B cell (primary cell): ENCODE measurements at regions of chr13 and their contacts with region 1.

Region 1: GRCh38 chr13:67224148-67224846 is 5.8 kb downstream of the PCDH9 start:
- DNase-seq: peak; percentile 83
- ATAC-seq: peak; percentile 72
- H3K4me3 ChIP-seq: peak overlapping the region; percentile 22 to 56 (median 35)
- H3K4me3 Mint-ChIP-seq: peak overlapping the region; percentile 72
- H3K27ac ChIP-seq: peak overlapping the region in 1 of 2 donors; percentile 42
- H3K27ac Mint-ChIP-seq: peak overlapping the region; percentile 57
- H3K4me1 ChIP-seq: peaks cover 16 to 50% of the 10 kb centered on the region in 2 donors
- H3K4me1 Mint-ChIP-seq: peaks cover 36% of the 10 kb centered on the region
- H3K27me3 ChIP-seq: no peaks in the 10 kb centered on the region
- H3K27me3 Mint-ChIP-seq: no peaks in the 10 kb centered on the region
- CTCF ChIP-seq: peak; percentile 75

Region 2: GRCh38 chr13:65656740-65657329 is 1567.5 kb before region 1 on chr13:
- CTCF ChIA-PET with region 1: no interaction called
- POLR2A ChIA-PET with region 1: no interaction called
- intact Hi-C with region 1: loop called (anchors 10 kb)
- DNase-seq: no peak
- ATAC-seq: no peak
- H3K4me3 ChIP-seq: no peak overlapping the region
- H3K4me3 Mint-ChIP-seq: no peak overlapping the region
- H3K27ac ChIP-seq: no peak overlapping the region
- H3K27ac Mint-ChIP-seq: no peak overlapping the region
- H3K4me1 ChIP-seq: no peaks in the 10 kb centered on the region
- H3K4me1 Mint-ChIP-seq: no peaks in the 10 kb centered on the region
- H3K27me3 ChIP-seq: no peaks in the 10 kb centered on the region
- H3K27me3 Mint-ChIP-seq: no peaks in the 10 kb centered on the region
- CTCF ChIP-seq: no peak

Region 3: DNA sequence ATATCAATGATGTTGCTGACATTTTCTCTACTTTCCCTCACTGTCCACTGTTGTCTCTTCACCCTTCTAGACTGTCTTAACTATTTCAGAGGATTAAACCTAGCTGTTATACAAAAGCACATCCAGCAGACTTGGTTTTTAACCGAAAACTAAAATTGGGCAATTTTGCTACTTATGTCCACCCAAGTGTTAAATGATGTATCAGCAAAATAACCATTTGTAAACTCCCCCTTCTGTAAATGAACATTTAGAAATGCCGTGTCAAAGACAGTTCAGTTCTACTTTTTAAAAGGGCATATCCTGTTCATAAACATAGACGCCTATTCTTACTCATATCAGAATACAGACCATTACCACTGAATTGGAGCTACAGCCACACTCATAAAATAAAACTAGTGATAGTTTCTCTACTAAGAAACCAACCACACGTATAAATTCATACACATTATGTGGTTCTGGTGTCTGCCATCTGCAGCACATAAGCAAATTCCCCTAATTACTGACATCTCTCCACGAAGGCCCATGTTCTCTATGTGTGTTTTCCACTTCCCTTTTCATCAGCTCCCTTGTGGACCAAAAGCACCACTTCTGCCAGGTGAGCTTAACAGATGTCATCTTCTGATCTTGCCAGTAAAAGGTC is 1086.0 kb before region 1 on chr13:
- CTCF ChIA-PET with region 1: no interaction called
- POLR2A ChIA-PET with region 1: no interaction called
- intact Hi-C with region 1: loop called (anchors 10 kb)
- DNase-seq: peak; percentile 73
- ATAC-seq: peak; percentile 89
- H3K4me3 ChIP-seq: no peak overlapping the region
- H3K4me3 Mint-ChIP-seq: peak overlapping the region; percentile 5
- H3K27ac ChIP-seq: peak overlapping the region; percentile 46 to 54
- H3K27ac Mint-ChIP-seq: peak overlapping the region; percentile 73
- H3K4me1 ChIP-seq: peaks cover 30 to 31% of the 10 kb centered on the region in 2 donors
- H3K4me1 Mint-ChIP-seq: peaks cover 26% of the 10 kb centered on the region
- H3K27me3 ChIP-seq: no peaks in the 10 kb centered on the region
- H3K27me3 Mint-ChIP-seq: no peaks in the 10 kb centered on the region
- CTCF ChIP-seq: no peak

Region 4: GRCh38 chr13:66618702-66619101 is 605.6 kb before region 1 on chr13:
- CTCF ChIA-PET with region 1: interaction called, 7 read pairs
- POLR2A ChIA-PET with region 1: no interaction called
- intact Hi-C with region 1: loop called (anchors 2 kb)
- DNase-seq: peak; percentile 18
- ATAC-seq: no peak
- H3K4me3 ChIP-seq: no peak overlapping the region
- H3K4me3 Mint-ChIP-seq: no peak overlapping the region
- H3K27ac ChIP-seq: no peak overlapping the region
- H3K27ac Mint-ChIP-seq: no peak overlapping the region
- H3K4me1 ChIP-seq: no peaks in the 10 kb centered on the region
- H3K4me1 Mint-ChIP-seq: no peaks in the 10 kb centered on the region
- H3K27me3 ChIP-seq: no peaks in the 10 kb centered on the region
- H3K27me3 Mint-ChIP-seq: no peaks in the 10 kb centered on the region
- CTCF ChIP-seq: peak; percentile 64

Region 5: DNA sequence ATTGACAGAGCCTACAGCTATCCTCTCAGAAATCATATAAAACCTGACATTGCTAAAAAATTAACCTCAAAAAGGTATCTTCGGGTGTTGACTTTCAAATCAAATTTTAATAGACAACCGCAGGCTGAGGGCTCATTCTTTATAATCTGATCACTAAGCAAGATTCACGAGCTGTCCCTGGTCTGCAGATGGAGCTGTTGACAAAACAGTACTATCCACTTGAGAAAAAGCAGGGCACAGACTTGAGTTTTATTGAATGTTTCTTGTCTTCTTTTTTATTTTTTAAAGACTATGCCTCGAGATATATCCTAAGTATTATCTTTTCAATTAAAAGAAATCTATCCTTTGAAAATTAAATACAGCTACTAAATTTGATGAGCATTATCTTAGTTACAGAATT is 534.7 kb before region 1 on chr13:
- CTCF ChIA-PET with region 1: interaction called, 7 read pairs
- POLR2A ChIA-PET with region 1: no interaction called
- intact Hi-C with region 1: loop called (anchors 1 kb)
- DNase-seq: peak; percentile 18
- ATAC-seq: no peak
- H3K4me3 ChIP-seq: no peak overlapping the region
- H3K4me3 Mint-ChIP-seq: no peak overlapping the region
- H3K27ac ChIP-seq: no peak overlapping the region
- H3K27ac Mint-ChIP-seq: no peak overlapping the region
- H3K4me1 ChIP-seq: peaks cover 0 to 6% of the 10 kb centered on the region in 2 donors
- H3K4me1 Mint-ChIP-seq: peaks cover 11% of the 10 kb centered on the region
- H3K27me3 ChIP-seq: no peaks in the 10 kb centered on the region
- H3K27me3 Mint-ChIP-seq: no peaks in the 10 kb centered on the region
- CTCF ChIP-seq: no peak

Region 6: DNA sequence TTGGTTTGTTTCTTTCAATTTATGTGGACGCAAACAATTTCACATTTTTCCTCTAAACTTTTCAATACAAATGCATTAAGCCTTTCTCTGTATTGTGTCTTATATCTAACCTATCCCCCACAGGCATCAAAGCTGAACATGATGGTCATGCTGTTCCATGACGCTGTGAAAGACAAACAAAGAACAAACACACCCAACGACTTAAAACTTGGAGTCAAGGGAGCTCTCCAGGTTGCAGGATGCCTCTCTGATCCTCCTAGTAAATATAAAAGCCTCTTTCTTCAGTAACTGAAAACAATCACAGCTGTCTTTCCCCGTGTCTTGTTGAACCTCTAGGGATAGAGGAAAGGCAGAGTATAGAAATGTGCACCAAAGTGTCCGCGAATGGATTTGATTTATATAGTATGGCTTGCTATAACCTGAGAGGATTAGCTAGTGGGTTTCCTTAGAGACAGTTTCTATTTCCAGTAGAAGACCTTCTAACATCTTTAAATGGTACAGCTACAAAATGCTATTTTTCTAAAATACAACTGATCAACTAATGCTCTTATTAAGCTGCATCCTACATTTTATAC is 37.2 kb before region 1 on chr13:
- CTCF ChIA-PET with region 1: no interaction called
- POLR2A ChIA-PET with region 1: no interaction called
- intact Hi-C with region 1: no loop called
- DNase-seq: no peak
- ATAC-seq: no peak
- H3K4me3 ChIP-seq: no peak overlapping the region
- H3K4me3 Mint-ChIP-seq: no peak overlapping the region
- H3K27ac ChIP-seq: no peak overlapping the region
- H3K27ac Mint-ChIP-seq: no peak overlapping the region
- H3K4me1 ChIP-seq: no peaks in the 10 kb centered on the region
- H3K4me1 Mint-ChIP-seq: no peaks in the 10 kb centered on the region
- H3K27me3 ChIP-seq: no peaks in the 10 kb centered on the region
- H3K27me3 Mint-ChIP-seq: no peaks in the 10 kb centered on the region
- CTCF ChIP-seq: no peak

Region 7: DNA sequence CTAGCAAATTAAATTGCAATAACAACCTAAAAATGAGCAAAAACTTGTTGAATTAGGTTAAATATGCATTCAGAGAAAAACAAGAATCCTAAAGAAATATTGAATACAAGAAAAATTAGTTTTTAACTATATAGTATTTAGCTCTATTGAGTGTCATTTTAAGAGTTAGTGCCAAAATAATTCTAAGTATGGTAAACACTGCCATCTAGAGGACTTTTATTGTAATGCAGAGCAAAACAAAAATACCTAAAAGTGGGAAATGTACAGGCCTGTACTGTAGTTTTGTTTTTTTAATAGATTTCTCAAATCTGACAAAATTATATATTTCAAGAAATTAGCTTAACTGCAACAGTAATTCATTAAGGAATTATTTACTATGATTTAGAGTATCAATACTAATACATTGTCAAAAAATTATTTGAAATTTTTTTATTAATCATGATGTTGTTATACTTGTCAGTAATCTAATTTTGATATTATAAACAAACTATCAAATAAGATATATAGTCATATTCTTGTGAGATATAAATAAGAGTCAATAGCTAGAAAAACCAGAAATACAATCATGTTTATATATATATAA is 14.1 kb after region 1 on chr13:
- CTCF ChIA-PET with region 1: interaction called, 15 read pairs
- POLR2A ChIA-PET with region 1: no interaction called
- intact Hi-C with region 1: no loop called
- DNase-seq: peak; percentile 59
- ATAC-seq: peak; percentile 47
- H3K4me3 ChIP-seq: no peak overlapping the region
- H3K4me3 Mint-ChIP-seq: no peak overlapping the region
- H3K27ac ChIP-seq: no peak overlapping the region
- H3K27ac Mint-ChIP-seq: no peak overlapping the region
- H3K4me1 ChIP-seq: no peaks in the 10 kb centered on the region
- H3K4me1 Mint-ChIP-seq: no peaks in the 10 kb centered on the region
- H3K27me3 ChIP-seq: no peaks in the 10 kb centered on the region
- H3K27me3 Mint-ChIP-seq: no peaks in the 10 kb centered on the region
- CTCF ChIP-seq: peak; percentile 97